B cell (primary cell): ENCODE measurements at regions of chr7 and their contacts with region 1.

Region 1: GRCh38 chr7:91940572-91941341 is at the start of gene AKAP9:
- DNase-seq: peak; percentile 93
- ATAC-seq: peak; percentile 92
- H3K4me3 ChIP-seq: peak within 1 kb of the TSS; percentile 74 to 98 (median 83)
- H3K4me3 Mint-ChIP-seq: peak within 1 kb of the TSS; percentile 95
- H3K27ac ChIP-seq: peak within 1 kb of the TSS; percentile 90 to 97
- H3K27ac Mint-ChIP-seq: peak within 1 kb of the TSS; percentile 95
- H3K4me1 ChIP-seq: peaks cover 20 to 22% of the 10 kb centered on the region in 2 donors
- H3K4me1 Mint-ChIP-seq: peaks cover 31% of the 10 kb centered on the region
- H3K27me3 ChIP-seq: no peaks in the 10 kb centered on the region
- H3K27me3 Mint-ChIP-seq: no peaks in the 10 kb centered on the region
- CTCF ChIP-seq: no peak
- total RNA-seq, gene AKAP9: 101 and 106 TPM in 2 replicates

Region 2: DNA sequence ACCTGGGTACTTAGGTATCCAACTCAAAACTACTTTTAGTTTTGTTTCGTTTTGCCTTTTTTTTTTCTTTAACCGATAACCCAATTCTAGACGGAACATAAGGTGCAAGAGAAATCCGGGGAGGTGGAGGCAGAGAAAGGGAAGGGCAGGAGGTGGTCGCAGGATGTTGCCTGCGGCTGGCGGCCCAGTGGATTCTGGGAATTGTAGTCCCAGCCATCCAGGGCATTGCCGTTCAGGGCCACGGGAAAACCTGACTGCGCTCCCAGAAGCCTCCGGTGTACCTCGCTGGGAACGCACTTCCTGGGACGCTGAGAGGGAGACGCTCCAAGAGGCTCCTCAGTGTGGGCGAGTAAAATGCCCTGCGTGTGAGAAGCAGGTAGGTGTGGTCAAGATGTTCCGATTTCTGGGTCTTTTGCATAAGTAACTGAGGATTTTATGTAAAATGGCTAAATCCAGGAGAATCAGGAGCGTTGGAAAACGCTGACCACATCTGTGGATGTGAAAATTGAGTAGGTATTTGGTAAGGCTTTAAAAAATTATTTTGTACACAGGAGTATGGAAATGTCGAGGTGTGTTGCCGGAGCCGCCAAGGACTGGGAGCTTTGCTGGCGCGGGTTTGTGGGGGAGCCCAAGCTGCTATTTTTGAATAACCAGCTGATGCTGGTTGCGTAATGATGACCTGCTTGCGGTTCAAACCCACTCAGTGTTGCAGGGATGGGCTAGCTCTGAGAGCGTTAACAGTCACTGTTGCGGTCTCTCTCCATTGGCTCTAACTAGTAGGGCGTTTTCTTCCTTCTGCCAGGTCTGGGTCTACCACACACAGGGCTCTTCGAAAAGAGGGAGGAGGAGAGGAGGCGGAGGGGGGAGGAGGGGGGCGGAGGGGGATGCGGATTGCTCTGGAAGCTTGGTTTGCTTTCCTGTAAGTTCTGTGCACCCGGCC is 1537.3 kb before region 1 on chr7 and contains the start of gene CLDN12:
- CTCF ChIA-PET with region 1: no interaction called
- POLR2A ChIA-PET with region 1: no interaction called
- intact Hi-C with region 1: loop called (anchors 2 kb)
- DNase-seq: peak; percentile 90
- ATAC-seq: peak; percentile 96
- H3K4me3 ChIP-seq: peak within 1 kb of the TSS; percentile 65 to 98 (median 81)
- H3K4me3 Mint-ChIP-seq: peak within 1 kb of the TSS; percentile 99
- H3K27ac ChIP-seq: peak within 1 kb of the TSS; percentile 47 to 72
- H3K27ac Mint-ChIP-seq: peak within 1 kb of the TSS; percentile 98
- H3K4me1 ChIP-seq: peaks cover 5% of the 10 kb centered on the region in 2 donors
- H3K4me1 Mint-ChIP-seq: peaks cover 20% of the 10 kb centered on the region
- H3K27me3 ChIP-seq: no peaks in the 10 kb centered on the region
- H3K27me3 Mint-ChIP-seq: no peaks in the 10 kb centered on the region
- CTCF ChIP-seq: no peak
- total RNA-seq, gene CLDN12: 14.1 and 17.3 TPM in 2 replicates

Region 3: GRCh38 chr7:91201442-91202113 is 739.2 kb before region 1 on chr7:
- CTCF ChIA-PET with region 1: no interaction called
- POLR2A ChIA-PET with region 1: no interaction called
- intact Hi-C with region 1: no loop called
- DNase-seq: no peak
- ATAC-seq: no peak
- H3K4me3 ChIP-seq: no peak overlapping the region
- H3K4me3 Mint-ChIP-seq: no peak overlapping the region
- H3K27ac ChIP-seq: no peak overlapping the region
- H3K27ac Mint-ChIP-seq: peak overlapping the region; percentile 34
- H3K4me1 ChIP-seq: no peaks in the 10 kb centered on the region
- H3K4me1 Mint-ChIP-seq: peaks cover 5% of the 10 kb centered on the region
- H3K27me3 ChIP-seq: no peaks in the 10 kb centered on the region
- H3K27me3 Mint-ChIP-seq: no peaks in the 10 kb centered on the region
- CTCF ChIP-seq: no peak

Region 4: DNA sequence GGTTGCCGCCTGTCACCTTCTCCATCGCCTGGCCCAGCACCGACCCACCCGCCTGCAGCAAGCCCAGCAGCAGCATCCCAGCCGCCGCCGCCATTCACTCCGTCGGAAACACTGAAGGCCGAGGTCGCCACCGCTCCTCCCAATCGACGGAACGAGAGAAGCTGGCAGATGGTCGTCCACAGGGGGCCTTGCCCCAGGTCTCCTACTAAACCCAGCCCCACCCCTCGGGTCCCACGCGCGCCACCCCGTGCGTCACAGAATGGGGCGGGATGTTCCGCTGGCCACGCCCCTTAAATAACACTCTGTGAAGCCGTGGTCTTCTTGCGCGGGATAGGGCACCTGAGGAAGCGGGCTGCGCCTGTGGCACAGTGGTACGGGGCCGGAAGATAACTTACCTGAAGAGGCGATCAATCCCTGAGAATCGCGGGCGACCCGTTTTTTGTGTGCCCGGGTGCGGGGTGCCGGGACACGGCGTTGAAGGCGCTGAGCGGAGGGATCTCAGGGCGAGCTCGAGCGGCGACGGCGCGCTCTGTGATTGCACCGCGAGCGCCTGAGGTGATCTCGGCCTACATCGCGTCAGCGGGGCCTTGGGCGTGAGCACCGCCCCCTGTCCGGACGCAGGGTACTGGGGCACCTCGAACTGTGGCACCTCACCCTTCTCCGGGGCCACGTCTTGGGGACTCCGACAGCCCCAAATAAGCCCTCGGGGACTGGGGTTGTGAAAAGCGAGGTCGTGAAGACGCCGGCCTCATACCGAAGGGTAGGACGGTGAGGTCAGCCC is 193.7 kb after region 1 on chr7 and contains the start of gene CYP51A1:
- CTCF ChIA-PET with region 1: no interaction called
- POLR2A ChIA-PET with region 1: interaction called, 4 read pairs
- intact Hi-C with region 1: loop called (anchors 1 kb)
- DNase-seq: peak; percentile 99
- ATAC-seq: peak; percentile 84
- H3K4me3 ChIP-seq: peak within 1 kb of the TSS; percentile 86 to 94 (median 90)
- H3K4me3 Mint-ChIP-seq: peak within 1 kb of the TSS; percentile 99
- H3K27ac ChIP-seq: peak within 1 kb of the TSS; percentile 94 to 98
- H3K27ac Mint-ChIP-seq: peak within 1 kb of the TSS; percentile 100
- H3K4me1 ChIP-seq: peaks cover 18 to 27% of the 10 kb centered on the region in 2 donors
- H3K4me1 Mint-ChIP-seq: peaks cover 39% of the 10 kb centered on the region
- H3K27me3 ChIP-seq: no peaks in the 10 kb centered on the region
- H3K27me3 Mint-ChIP-seq: no peaks in the 10 kb centered on the region
- CTCF ChIP-seq: no peak
- total RNA-seq, gene CYP51A1: 36.1 and 37.9 TPM in 2 replicates

Region 5: GRCh38 chr7:92245487-92246362 is 305.0 kb after region 1 on chr7 and contains the starts of genes ANKIB1 and KRIT1:
- CTCF ChIA-PET with region 1: no interaction called
- POLR2A ChIA-PET with region 1: no interaction called
- intact Hi-C with region 1: loop called (anchors 1 kb)
- DNase-seq: peak; percentile 92
- ATAC-seq: peak; percentile 78
- H3K4me3 ChIP-seq: peak within 1 kb of the TSS; percentile 55 to 83 (median 81)
- H3K4me3 Mint-ChIP-seq: peak within 1 kb of the TSS; percentile 99
- H3K27ac ChIP-seq: peak within 1 kb of the TSS; percentile 84 to 97
- H3K27ac Mint-ChIP-seq: peak within 1 kb of the TSS; percentile 99
- H3K4me1 ChIP-seq: peaks cover 15 to 31% of the 10 kb centered on the region in 2 donors
- H3K4me1 Mint-ChIP-seq: peaks cover 39% of the 10 kb centered on the region
- H3K27me3 ChIP-seq: no peaks in the 10 kb centered on the region
- H3K27me3 Mint-ChIP-seq: no peaks in the 10 kb centered on the region
- CTCF ChIP-seq: peak; percentile 20
- total RNA-seq, gene ANKIB1: 76.7 and 77.5 TPM in 2 replicates
- total RNA-seq, gene KRIT1: 78.1 and 85.1 TPM in 2 replicates